ENCODE measurements at regions of chrX and their contacts with region 1.

Region 1: DNA sequence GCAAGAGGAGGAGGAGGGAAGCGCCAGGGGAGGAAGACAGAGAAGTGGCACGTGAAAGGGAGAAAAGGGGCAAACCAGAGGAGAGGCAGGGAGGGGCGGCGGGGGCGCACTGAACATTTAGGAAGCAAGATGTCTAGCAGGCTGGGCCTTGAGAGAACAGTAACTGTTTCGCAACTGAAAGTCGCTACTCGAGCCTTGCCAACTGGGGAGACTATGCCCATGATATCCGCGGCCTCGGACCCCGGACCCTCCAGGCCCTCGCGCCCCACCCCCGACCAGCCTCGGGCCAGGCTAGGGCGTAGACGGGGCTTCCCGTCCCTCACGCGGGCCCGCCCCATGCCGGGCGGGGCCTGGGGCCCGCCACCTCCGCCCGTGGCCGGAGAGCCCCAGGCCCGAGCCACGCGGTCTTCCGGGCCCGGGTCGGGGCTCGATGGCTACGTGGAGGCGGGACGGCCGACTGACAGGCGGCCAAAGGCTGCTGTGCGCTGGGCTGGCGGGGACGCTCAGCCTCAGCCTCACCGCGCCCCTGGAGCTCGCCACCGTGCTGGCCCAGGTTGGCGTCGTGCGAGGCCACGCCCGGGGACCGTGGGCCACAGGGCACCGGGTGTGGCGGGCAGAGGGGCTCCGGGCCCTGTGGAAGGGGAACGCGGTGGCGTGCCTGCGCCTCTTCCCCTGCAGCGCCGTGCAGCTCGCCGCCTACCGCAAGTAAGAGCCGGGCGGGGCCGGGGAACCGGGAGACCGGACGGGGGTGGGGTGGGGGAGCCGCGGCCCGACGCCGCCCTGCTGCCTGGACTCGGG is at the start of gene SLC25A43:
- DNase-seq: no peak
- H3K4me3 ChIP-seq: peak within 1 kb of the TSS; percentile 54 to 55
- H3K27ac ChIP-seq: peak within 1 kb of the TSS; percentile 69 to 84
- H3K4me1 ChIP-seq: no peaks in the 10 kb centered on the region
- H3K27me3 ChIP-seq: no peaks in the 10 kb centered on the region
- CTCF ChIP-seq: no peak
- POLR2A ChIP-seq: no peak
- total RNA-seq, gene SLC25A43: 7.4 to 15.3 TPM

Region 2: GRCh38 chrX:119235872-119236622 is 163.1 kb before region 1 on chrX and contains the start of gene PGRMC1:
- intact Hi-C with region 1: loop called (anchors 10 kb)
- DNase-seq: peak; percentile 72
- H3K4me3 ChIP-seq: peak within 1 kb of the TSS; percentile 59 to 69
- H3K27ac ChIP-seq: peak within 1 kb of the TSS; percentile 79 to 84
- H3K4me1 ChIP-seq: no peaks in the 10 kb centered on the region
- H3K27me3 ChIP-seq: no peaks in the 10 kb centered on the region
- CTCF ChIP-seq: no peak
- POLR2A ChIP-seq: peak; percentile 76
- total RNA-seq, gene PGRMC1: 156 to 171 TPM

Region 3: DNA sequence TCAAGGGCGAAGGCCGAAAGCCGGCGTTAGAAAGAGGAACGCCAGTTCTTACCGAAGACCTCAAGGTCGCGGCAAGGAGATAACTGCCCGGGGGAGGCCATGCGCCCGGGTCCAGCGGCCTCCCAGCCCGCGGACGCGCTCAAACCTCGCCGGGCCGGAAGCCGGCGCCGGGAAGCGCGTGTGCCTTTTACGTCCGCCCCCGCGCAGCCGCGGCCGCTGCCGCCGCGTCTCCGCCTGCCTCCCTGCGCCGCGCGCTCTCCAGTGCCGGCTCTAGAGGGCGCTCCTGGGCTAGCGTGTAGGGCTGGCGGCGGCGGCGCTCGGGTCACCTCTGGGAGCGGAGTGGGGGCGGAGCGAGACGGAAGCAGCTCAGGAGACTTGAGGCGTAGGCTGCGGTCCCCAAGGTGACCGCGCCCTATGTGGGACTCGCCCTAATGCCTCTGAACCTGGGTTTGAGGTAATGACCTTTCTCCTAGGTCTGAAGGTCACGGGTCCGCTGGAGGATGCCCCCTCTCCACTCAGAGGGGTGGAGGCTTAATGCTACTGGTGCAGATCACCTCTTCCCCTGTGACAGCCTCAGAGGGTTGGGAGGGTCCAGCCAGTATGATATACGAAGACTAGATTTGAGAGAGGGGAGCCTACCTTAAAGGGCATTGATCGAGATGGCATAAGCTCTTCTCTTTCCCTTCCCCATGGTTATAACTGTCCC is 69.9 kb after region 1 on chrX:
- intact Hi-C with region 1: loop called (anchors 5 kb)
- DNase-seq: peak; percentile 79
- H3K4me3 ChIP-seq: peak overlapping the region; percentile 52 to 53
- H3K27ac ChIP-seq: peak overlapping the region; percentile 87 to 88
- H3K4me1 ChIP-seq: no peaks in the 10 kb centered on the region
- H3K27me3 ChIP-seq: no peaks in the 10 kb centered on the region
- CTCF ChIP-seq: peak; percentile 65 to 90 (median 79)
- POLR2A ChIP-seq: peak; percentile 45